ENCODE measurements at regions of chr11 and their contacts with region 1.

Region 1: DNA sequence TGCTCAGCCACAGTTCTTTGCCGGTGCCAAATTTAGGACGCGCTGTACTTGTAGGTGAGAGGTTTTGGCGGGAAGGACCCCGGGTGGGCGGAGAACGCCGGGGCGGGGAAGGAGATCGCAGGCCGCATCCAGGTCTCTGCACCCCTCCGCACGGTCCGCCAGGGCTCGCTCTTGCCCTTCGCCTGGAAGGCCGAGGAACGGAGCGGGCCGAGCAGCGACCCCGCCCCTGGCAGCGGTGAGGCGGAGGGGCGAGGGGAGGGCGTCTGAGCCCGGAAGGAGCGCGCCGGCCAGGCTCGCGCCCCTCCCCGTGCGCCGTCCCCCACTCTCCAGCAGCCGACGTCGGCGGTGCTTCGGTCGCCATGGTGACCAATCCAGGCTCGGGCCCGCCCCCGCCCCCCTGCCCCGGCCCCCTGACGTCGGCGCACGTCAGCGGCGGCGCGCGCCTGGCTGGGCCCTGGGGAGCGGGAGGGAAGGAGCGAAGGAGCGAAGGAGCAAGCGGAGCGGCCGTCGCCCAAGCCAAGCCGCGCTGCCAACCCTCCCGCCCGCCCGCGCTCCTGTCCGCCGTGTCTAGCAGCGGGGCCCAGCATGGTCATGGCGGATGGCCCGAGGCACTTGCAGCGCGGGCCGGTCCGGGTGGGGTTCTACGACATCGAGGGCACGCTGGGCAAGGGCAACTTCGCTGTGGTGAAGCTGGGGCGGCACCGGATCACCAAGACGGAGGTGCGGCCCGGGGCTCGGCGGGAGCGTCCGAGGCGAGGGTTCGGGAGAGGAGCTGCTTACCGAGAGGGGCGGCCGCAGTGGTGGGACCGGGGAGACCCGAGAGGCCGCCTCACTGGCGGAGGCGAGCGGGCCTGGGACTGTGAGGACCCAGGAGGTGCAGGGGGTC is at the start of gene SIK2:
- DNase-seq: peak; percentile 93
- H3K4me3 Mint-ChIP-seq: peak within 1 kb of the TSS; percentile 91
- H3K27ac Mint-ChIP-seq: peak within 1 kb of the TSS; percentile 77
- H3K4me1 Mint-ChIP-seq: peaks cover 30% of the 10 kb centered on the region
- H3K27me3 Mint-ChIP-seq: no peaks in the 10 kb centered on the region
- total RNA-seq, gene SIK2: 4.6 to 6.2 TPM

Region 2: DNA sequence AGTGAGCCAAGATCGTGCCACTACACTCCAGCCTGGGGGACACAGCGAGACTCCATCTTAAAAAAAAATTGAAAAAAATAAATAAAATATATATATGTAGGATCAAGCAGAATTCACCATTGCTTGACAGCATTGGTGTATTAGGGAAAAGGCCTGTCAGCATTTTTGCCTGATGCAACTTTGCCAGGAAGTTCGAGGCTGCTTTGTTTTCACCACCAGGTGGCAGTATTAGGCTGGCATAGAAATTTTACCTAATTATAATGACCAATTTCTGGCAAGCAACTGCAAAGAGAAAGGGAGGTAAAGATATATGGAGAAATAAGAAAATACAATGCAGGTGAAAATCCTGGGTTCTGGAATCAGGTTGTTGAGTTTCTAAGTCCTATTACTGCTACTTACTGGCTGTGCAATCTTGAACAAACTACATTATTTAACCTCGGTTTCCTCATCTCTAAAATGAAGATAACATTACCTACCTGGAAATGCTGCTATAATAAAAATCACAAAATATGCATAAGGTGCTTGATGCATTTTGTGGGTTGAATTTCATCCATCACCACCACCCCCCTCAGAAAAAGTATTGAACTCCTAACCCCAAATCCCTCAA is 37.0 kb before region 1 on chr11:
- CTCF ChIA-PET with region 1: no interaction called
- POLR2A ChIA-PET with region 1: no interaction called
- intact Hi-C with region 1: loop called (anchors 2 kb)
- DNase-seq: peak; percentile 70
- H3K4me3 Mint-ChIP-seq: no peak overlapping the region
- H3K27ac Mint-ChIP-seq: no peak overlapping the region
- H3K4me1 Mint-ChIP-seq: no peaks in the 10 kb centered on the region
- H3K27me3 Mint-ChIP-seq: no peaks in the 10 kb centered on the region

Region 3: DNA sequence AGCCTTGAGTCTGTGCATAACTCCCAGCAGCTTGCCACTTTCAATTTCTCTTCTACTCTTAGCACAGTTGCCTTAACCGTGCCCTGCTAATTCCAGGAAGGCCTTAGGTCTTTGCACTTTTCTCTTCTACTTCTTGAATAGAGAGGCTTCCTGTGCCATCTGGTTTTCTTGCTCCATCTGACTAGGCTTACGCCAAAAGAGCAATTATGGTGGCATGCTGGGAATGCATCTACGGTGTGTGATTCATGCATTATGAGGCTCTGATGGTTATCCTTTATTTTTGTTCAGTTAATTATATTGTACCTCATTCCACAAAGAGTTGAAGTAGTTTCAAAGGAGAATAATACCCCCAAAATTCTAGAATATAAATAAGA is 29.4 kb after region 1 on chr11:
- CTCF ChIA-PET with region 1: interaction called, 10 read pairs
- POLR2A ChIA-PET with region 1: no interaction called
- intact Hi-C with region 1: no loop called
- DNase-seq: no peak
- H3K4me3 Mint-ChIP-seq: no peak overlapping the region
- H3K27ac Mint-ChIP-seq: no peak overlapping the region
- H3K4me1 Mint-ChIP-seq: peaks cover 20% of the 10 kb centered on the region
- H3K27me3 Mint-ChIP-seq: no peaks in the 10 kb centered on the region

Region 4: GRCh38 chr11:111777094-111778046 is 175.1 kb after region 1 on chr11:
- CTCF ChIA-PET with region 1: interaction called, 58 read pairs
- POLR2A ChIA-PET with region 1: interaction called, 3 read pairs
- intact Hi-C with region 1: loop called (anchors 1 kb)
- DNase-seq: no peak
- H3K4me3 Mint-ChIP-seq: no peak overlapping the region
- H3K27ac Mint-ChIP-seq: no peak overlapping the region
- H3K4me1 Mint-ChIP-seq: no peaks in the 10 kb centered on the region
- H3K27me3 Mint-ChIP-seq: no peaks in the 10 kb centered on the region

Region 5: DNA sequence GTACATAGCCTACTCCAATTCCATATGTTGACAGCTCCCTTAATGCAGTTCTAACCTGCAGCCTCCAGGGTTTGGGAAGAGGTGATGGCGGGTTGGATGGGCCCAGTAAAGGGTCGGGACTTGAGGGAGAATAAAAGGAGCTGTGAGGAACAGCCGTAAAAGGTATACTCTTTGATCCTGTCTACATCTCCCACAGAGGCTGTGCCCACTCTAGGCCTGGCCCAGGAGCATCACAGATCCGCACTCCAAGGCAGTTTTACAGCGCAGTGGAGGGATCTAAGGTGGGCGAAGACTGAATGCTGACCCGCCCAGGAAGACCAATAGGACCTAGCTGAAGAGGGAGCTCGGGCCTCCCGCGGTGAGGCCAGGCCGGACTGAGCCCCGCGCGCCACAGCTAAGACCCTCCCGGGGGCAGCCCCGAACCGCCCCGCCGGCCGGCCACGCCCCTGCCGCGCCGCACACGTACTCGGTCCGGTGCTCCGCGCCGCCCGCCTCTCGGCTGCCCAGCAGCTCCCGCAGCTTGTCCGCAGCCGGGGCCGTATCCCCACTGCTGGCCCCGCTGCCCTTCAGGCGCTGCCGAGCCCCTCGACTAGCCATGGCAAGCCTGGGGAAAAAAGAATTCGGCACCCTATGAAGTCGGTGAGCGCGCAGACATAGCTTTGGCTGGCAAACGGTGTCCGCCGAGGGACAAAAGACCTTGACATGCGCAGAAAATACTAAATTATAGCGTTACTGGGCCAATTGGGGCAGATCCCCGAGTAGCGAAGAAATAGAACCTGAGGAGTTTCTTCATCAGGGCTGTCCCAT is 268.9 kb after region 1 on chr11 and contains the start of gene ALG9:
- CTCF ChIA-PET with region 1: interaction called, 5 read pairs
- POLR2A ChIA-PET with region 1: interaction called, 3 read pairs
- intact Hi-C with region 1: loop called (anchors 1 kb)
- DNase-seq: peak; percentile 92
- H3K4me3 Mint-ChIP-seq: peak within 1 kb of the TSS; percentile 92
- H3K27ac Mint-ChIP-seq: peak within 1 kb of the TSS; percentile 86
- H3K4me1 Mint-ChIP-seq: peaks cover 24% of the 10 kb centered on the region
- H3K27me3 Mint-ChIP-seq: no peaks in the 10 kb centered on the region
- total RNA-seq, gene ALG9: 23.6 to 26.7 TPM

Region 6: DNA sequence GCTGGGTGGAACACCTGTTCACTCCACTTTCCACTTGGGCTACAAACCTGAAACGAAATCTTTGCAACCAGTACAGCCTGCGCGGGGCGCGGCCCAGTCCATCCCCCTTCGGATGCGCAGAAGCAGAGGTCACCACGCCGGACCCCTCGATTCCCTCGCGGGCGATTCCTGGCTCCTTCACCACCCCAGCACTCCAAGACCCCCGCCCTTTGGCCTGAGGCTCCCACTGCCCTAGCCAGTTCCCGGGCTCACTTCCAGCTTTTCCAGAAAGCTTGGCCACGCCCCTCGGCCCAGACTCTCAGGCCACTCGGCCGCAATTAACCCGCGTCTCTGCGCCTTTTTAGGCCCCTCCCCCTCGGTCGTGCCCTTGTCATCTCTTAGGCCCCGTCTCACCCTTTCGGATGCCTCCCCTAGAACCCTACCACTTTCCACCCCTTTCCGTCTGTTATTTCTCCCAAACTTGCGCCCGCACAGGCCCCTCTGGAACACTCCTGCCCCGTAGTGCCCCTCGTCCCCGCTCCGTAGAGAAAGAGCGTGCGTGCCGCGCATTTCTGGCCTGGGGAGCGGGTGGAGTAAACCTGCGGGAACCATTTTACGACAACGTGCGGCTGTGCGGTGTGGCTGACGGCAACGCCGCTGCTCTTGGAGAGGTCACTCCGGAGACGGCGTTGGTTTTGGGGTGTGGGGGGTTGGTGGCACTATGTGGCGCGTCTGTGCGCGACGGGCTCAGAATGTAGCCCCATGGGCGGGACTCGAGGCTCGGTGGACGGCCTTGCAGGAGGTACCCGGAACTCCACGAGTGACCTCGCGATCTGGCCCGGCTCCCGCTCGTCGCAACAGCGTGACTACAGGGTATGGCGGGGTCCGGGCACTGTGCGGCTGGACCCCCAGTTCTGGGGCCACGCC is 422.8 kb after region 1 on chr11 and contains the start of gene DLAT:
- CTCF ChIA-PET with region 1: no interaction called
- POLR2A ChIA-PET with region 1: no interaction called
- intact Hi-C with region 1: loop called (anchors 5 kb)
- DNase-seq: peak; percentile 92
- H3K4me3 Mint-ChIP-seq: peak within 1 kb of the TSS; percentile 98
- H3K27ac Mint-ChIP-seq: peak within 1 kb of the TSS; percentile 98
- H3K4me1 Mint-ChIP-seq: peaks cover 21% of the 10 kb centered on the region
- H3K27me3 Mint-ChIP-seq: no peaks in the 10 kb centered on the region
- total RNA-seq, gene DLAT: 36.4 to 39.0 TPM

Measured in activated CD4-positive, alpha-beta memory T cell treated with anti-CD3 and anti-CD28 coated beads for 36 hours (primary cell).